Sigmoid colon (tissue), 7 donors: ENCODE measurements at regions of chr17 and their contacts with region 1.

Region 1: DNA sequence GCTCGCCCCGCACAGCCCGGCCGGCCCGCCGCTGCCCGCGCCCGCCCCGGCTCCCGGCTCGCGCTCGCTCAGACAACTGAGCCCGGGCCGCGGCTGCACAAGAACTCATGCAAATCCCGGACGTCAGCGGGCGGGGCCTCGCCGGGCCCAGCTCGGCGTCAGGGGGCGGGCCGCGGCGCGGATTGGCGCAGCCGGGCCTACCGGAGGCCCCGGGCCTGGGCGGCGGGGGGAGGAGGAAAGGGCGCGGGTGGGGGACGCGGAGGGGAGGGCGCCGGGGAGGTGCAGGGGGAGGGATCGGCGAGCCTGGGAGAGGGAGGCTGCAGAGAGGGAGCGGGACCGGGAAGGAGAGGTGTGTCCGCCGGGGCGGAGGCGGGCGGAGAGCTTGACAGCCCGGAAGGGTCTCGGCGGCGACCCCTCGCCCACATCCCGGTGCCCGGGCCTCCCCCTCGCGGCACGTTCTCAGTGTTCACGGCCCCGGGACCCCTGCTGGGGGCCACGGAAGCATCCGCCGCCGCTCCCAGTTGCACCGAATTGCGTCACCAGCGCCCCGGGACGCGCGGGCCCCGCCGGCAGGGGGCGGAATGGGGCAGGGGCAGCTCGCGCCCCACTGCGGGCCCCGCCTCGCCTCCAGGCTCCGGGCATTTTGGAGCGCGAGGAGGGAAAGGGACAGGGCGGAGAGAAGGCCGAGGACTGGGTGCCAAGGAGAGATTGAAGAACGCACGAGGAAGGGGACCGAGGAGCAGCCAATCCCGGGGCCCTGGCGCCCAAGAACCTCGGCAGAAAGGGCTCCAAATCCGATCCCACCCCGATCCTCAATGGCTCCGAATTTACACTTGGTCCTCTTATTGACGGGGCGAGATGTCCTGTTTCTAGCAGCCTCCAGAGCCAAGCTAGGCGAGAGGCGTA is at the start of gene CBX4:
- DNase-seq: peak; percentile 98
- H3K4me3 ChIP-seq: peak within 1 kb of the TSS; percentile 35 to 84 (median 76)
- H3K27ac ChIP-seq: peak within 1 kb of the TSS; percentile 90 to 98 (median 97)
- H3K4me1 ChIP-seq: peaks cover 0 to 79% (median 73%) of the 10 kb centered on the region in 4 donors
- H3K27me3 ChIP-seq: peaks cover 37 to 53% (median 41%) of the 10 kb centered on the region in 3 donors
- CTCF ChIP-seq: peak in 3 of 4 experiments; percentile 41 to 53 (median 45)
- EP300 ChIP-seq: no peak
- POLR2A ChIP-seq: peak in 1 of 2 donors; percentile 25
- total RNA-seq, gene CBX4: 6.1 to 9.8 (median 7.5) TPM

Region 2: DNA sequence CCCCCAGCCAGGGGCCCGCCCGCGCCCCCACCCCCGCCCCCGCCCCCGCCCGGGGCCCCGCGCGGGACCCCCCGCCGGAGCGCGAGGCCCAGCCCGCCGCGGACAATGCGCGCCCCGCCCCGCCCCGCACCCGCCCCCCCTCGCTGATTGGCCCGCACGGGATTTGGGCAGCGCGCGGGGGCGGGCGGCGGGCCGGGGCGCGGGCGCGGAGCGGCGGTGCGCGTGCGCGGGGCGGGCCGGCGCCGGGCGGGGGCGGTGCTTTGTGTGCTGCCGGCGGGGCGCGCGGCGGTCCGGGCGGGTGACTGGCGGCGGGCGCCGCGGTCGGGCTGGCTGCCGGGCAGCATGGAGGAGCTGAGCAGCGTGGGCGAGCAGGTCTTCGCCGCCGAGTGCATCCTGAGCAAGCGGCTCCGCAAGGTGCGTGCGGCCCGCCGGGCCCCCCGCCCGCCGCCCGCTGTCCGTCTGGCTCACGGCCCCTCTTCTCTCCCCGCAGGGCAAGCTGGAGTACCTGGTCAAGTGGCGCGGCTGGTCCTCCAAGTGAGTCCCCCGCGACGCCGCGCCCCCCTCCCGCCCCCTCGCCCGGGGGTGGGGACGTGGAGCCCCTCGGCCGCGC is 61.6 kb before region 1 on chr17 and contains the start of gene CBX2:
- intact Hi-C with region 1: loop called (anchors 5 kb)
- DNase-seq: peak; percentile 86
- H3K4me3 ChIP-seq: peak within 1 kb of the TSS; percentile 36 to 62 (median 54)
- H3K27ac ChIP-seq: peak within 1 kb of the TSS; percentile 14 to 54 (median 34)
- H3K4me1 ChIP-seq: peaks cover 0 to 25% (median 18%) of the 10 kb centered on the region in 4 donors
- H3K27me3 ChIP-seq: peaks cover 34 to 94% (median 85%) of the 10 kb centered on the region in 3 donors
- CTCF ChIP-seq: no peak
- EP300 ChIP-seq: no peak
- POLR2A ChIP-seq: no peak
- total RNA-seq, gene CBX2: 0.33 to 0.95 (median 0.36) TPM in 3 of 4 donors, not detected in the other

Region 3: DNA sequence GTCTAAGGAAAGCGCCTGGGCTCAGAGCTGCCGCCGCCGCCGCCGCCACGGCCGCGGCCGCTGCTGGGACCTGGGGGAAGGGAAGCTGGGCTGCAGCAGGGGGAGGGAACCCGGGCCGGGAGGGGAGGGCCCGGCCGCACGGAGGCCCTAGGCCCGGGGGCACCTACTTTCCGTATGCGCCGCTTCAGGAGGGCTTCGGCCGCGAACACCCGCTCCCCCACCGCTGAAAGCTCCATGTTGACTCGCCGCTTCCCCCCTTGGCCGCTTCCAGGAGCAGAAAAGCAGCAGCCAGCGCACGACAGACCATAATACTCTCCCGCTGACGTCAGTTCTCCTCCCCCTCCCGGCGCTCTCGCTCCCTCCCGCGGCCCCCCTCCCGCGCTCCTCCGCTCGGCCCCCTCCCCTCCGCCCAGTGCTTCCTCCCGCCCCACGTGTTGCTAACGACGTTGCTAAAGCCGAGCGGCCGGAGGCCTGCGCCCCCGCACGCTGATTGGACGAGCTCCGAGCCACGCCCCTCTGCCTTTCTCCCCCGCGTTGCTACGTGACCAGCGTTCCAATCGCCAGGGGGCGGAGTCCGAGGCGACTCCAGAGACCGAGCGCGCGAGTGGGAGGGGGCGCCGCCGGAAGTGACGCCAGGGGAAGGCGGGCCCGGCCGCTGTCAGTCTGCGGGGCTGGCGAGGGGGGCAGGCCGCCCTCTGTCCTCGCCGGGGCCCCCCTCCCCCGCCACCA is 42.7 kb before region 1 on chr17 and contains the start of gene CBX8:
- intact Hi-C with region 1: loop called (anchors 1 kb)
- DNase-seq: peak; percentile 100
- H3K4me3 ChIP-seq: peak within 1 kb of the TSS; percentile 30 to 72 (median 66)
- H3K27ac ChIP-seq: peak within 1 kb of the TSS; percentile 77 to 86 (median 80)
- H3K4me1 ChIP-seq: peaks cover 0 to 88% (median 65%) of the 10 kb centered on the region in 4 donors
- H3K27me3 ChIP-seq: peaks cover 57 to 77% (median 75%) of the 10 kb centered on the region in 3 donors
- CTCF ChIP-seq: no peak
- EP300 ChIP-seq: no peak
- POLR2A ChIP-seq: no peak
- total RNA-seq, gene CBX8: 0.28 to 1.8 (median 1.2) TPM

Region 4: GRCh38 chr17:79810130-79811010 is 29.2 kb before region 1 on chr17:
- intact Hi-C with region 1: loop called (anchors 2 kb)
- DNase-seq: peak; percentile 82
- H3K4me3 ChIP-seq: peak overlapping the region in 3 of 4 donors; percentile 10 to 37 (median 12)
- H3K27ac ChIP-seq: no peak overlapping the region
- H3K4me1 ChIP-seq: peaks cover 0 to 55% (median 52%) of the 10 kb centered on the region in 4 donors
- H3K27me3 ChIP-seq: peaks cover 81 to 100% (median 93%) of the 10 kb centered on the region in 3 donors
- CTCF ChIP-seq: no peak
- EP300 ChIP-seq: no peak
- POLR2A ChIP-seq: no peak

Region 5: GRCh38 chr17:79915850-79916430 is 76.3 kb after region 1 on chr17:
- intact Hi-C with region 1: loop called (anchors 5 kb)
- DNase-seq: no peak
- H3K4me3 ChIP-seq: no peak overlapping the region
- H3K27ac ChIP-seq: no peak overlapping the region
- H3K4me1 ChIP-seq: peaks cover 0 to 16% (median 13%) of the 10 kb centered on the region in 4 donors
- H3K27me3 ChIP-seq: peaks cover 3 to 32% (median 8%) of the 10 kb centered on the region in 3 donors
- CTCF ChIP-seq: peak; percentile 14 to 28 (median 20)
- EP300 ChIP-seq: no peak
- POLR2A ChIP-seq: no peak

Region 6: DNA sequence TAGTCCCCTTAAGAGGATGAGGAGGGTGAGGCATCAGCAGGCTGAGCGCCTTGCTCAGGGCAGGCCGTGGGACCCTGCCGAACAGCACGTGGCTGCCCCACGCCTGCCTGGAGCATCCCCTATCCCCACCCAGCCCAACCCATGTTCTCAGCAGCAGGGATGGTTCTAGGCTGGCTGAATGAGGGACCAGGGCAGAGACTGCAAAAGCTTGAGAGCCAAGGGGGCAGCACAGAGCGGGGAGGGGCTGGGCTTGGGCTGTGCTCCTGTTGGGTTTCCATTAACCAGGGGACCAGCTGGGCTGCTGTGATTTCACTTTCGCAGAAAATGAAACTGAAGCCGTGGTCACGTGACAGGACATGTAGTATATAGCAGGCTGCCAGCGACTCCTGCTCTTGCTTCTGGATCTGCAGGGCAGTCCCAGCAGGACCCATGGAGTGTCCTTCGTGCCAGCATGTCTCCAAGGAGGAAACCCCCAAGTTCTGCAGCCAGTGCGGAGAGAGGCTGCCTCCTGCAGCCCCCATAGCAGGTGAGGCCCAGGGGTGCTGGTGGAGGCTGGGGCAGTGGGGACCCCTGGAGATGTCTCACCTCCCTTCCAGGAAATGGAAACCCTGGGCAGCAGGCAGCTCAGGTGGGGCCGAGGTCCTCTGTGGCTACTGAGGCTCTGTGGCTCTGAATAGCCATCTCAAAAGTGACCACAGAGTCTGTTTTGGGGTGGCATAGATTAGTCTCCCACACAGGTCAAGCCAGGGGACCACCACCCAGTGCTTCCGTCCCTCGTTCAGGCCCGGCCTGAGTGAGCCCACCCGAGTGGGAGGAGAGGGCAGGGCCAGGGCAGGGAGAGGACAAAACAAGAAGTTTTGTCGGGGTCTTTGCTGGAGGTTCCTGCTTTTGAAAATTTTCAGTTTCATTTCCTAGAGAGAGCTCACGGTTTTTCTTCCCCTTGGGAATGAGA is 423.9 kb after region 1 on chr17:
- intact Hi-C with region 1: loop called (anchors 5 kb)
- DNase-seq: peak; percentile 95
- H3K4me3 ChIP-seq: peak overlapping the region; percentile 18 to 42 (median 39)
- H3K27ac ChIP-seq: peak overlapping the region; percentile 94 to 100 (median 99)
- H3K4me1 ChIP-seq: peaks cover 0 to 41% (median 39%) of the 10 kb centered on the region in 4 donors
- H3K27me3 ChIP-seq: no peaks in the 10 kb centered on the region
- CTCF ChIP-seq: no peak
- EP300 ChIP-seq: no peak
- POLR2A ChIP-seq: no peak